ENCODE measurements at regions of chr12 and their contacts with region 1.

Region 1: GRCh38 chr12:107670999-107671643 is 14.5 kb upstream of the PWP1 start:
- DNase-seq: peak; percentile 66
- H3K4me3 Mint-ChIP-seq: no peak overlapping the region
- H3K27ac Mint-ChIP-seq: no peak overlapping the region
- H3K4me1 Mint-ChIP-seq: no peaks in the 10 kb centered on the region
- H3K27me3 Mint-ChIP-seq: peaks cover 2% of the 10 kb centered on the region

Region 2: DNA sequence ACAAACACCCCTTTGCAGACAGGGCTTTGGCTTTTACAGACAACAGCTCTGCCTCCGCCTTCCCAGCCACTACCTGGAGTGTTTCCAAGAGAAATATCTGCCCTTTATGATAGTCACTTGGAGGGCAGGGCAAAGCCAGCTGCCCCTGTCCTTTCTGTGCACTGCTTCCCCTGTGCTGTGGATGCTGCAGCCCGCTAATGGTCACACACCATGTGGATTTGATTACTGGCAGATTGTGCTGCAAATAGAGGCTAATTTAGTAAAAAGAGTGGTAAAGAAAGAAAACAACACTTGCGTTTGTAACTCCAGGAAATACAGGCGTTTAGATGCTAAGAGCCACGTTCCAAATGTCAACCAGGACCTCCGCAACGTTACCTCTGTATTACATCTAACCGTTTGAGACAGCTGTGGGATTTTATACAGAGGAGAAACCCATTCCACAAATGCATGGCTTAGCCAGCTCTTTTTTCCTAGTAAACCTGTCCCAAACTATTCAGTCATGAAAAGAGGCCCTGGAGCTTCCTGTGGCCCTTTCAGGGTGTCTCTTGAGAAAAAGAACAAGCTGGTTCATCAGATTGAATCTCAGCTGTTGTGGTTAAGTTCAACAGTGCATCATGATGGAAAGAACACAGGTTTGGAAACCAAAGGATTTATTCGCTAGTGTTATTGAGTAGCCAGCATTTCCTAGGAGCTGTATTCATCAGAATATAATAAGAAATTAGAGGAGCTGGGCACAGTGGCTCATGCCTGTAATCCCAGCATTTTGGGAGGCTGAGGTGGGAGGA is 15.6 kb before region 1 on chr12:
- CTCF ChIA-PET with region 1: interaction called, 12 read pairs
- POLR2A ChIA-PET with region 1: interaction called, 3 read pairs
- intact Hi-C with region 1: no loop called
- DNase-seq: no peak
- H3K4me3 Mint-ChIP-seq: no peak overlapping the region
- H3K27ac Mint-ChIP-seq: no peak overlapping the region
- H3K4me1 Mint-ChIP-seq: no peaks in the 10 kb centered on the region
- H3K27me3 Mint-ChIP-seq: no peaks in the 10 kb centered on the region

Region 3: DNA sequence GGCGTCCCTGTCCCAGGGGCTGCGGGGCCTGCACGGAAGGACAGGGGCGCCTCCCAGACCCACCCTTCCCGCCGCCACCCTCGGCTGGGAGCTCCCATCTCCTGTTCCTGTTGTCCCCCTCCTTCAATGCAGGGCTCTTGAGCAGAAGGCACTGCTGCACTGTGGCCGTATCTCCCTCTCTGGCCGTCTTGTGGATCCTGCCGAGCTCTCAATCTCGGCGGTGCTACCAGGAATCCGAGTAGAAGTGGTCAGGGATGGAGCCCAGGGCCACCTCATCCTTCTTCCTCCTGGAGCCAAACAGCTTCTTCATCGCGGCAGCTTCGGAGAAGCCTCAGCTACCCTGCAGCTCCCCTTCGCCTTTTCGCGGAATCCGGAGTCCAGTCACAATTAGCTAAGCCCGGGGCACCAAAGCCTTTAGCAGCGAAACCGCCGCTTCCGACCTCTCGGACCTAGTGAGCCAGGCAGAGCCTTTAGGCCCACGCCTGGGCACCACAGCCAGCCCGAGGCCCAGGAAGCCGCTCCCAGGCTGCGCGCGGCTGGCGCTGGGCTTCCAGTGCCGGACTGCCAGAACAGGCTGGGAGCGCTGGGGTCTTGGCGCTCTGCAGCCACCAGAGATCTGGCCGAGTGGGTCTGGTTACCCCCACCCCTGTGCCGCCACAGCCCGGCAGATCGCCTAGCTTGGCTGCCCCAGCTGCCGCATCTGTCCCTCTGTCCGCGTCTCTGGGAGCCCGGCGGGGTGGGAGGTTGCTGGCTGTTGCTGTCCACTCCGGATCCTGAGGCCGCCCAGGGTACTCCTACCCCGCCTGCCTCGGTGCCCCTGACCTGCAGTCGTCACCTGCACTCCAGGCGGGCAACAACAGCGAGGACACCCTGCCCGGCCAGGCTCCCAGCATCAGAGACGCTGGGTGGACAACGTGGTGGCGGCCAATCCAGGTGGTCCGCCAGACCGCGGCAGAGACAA is 172.5 kb after region 1 on chr12:
- CTCF ChIA-PET with region 1: no interaction called
- POLR2A ChIA-PET with region 1: no interaction called
- intact Hi-C with region 1: no loop called
- DNase-seq: no peak
- H3K4me3 Mint-ChIP-seq: no peak overlapping the region
- H3K27ac Mint-ChIP-seq: no peak overlapping the region
- H3K4me1 Mint-ChIP-seq: peaks cover 9% of the 10 kb centered on the region
- H3K27me3 Mint-ChIP-seq: peaks cover 32% of the 10 kb centered on the region

Region 4: GRCh38 chr12:108004319-108004718 is 333.2 kb after region 1 on chr12:
- CTCF ChIA-PET with region 1: no interaction called
- POLR2A ChIA-PET with region 1: no interaction called
- intact Hi-C with region 1: no loop called
- DNase-seq: no peak
- H3K4me3 Mint-ChIP-seq: no peak overlapping the region
- H3K27ac Mint-ChIP-seq: no peak overlapping the region
- H3K4me1 Mint-ChIP-seq: no peaks in the 10 kb centered on the region
- H3K27me3 Mint-ChIP-seq: peaks cover 9% of the 10 kb centered on the region

Measured in activated CD4-positive, alpha-beta memory T cell treated with anti-CD3 and anti-CD28 coated beads for 36 hours (primary cell).